CD4-positive, alpha-beta T cell (primary cell): ENCODE measurements at regions of chr10 and their contacts with region 1.

Region 1: GRCh38 chr10:17454161-17455014 is at the start of gene ST8SIA6:
- DNase-seq: peak; percentile 13 to 76 (median 48)
- ATAC-seq: peak; percentile 70
- H3K4me3 ChIP-seq: peak within 1 kb of the TSS; percentile 60
- H3K4me3 Mint-ChIP-seq: peak within 1 kb of the TSS; percentile 89
- H3K27ac ChIP-seq: no peak within 1 kb of the TSS
- H3K27ac Mint-ChIP-seq: peak within 1 kb of the TSS; percentile 59
- H3K4me1 ChIP-seq: peaks cover 15% of the 10 kb centered on the region
- H3K4me1 Mint-ChIP-seq: peaks cover 27% of the 10 kb centered on the region
- H3K27me3 ChIP-seq: no peaks in the 10 kb centered on the region
- H3K27me3 Mint-ChIP-seq: peaks cover 40% of the 10 kb centered on the region
- CTCF ChIP-seq: no peak
- total RNA-seq, gene ST8SIA6: 0.19 to 0.34 TPM

Region 2: DNA sequence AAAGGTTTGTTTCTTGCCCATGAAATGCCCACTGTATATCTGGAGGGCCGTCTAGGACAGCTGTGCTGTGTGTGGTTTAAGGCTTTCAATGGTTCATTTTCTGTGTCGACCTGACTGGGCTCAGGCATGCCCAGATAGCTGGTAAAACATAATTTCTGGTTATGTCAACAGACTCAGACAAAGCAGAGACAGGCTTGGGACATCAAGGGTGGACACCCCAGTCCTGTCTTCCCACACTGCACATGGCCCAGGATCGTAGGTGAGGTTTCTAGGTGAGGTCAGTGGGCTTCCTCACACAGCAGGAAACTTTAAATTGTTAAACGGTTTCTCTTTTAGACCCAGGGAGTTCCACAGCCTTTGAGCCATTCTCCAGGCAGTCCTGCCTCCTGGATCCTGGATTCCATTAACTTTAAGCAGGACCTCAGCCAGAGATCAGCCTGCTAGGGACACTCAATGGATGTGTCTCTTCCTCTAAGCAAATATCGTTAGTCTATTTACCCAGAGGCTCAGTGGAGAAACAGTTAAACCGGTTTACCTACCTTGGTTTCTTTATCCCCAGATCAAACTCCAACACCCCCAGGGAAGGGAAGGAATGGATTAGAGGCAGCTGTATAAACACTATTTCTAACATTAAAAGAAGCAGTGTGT is 66.4 kb before region 1 on chr10:
- CTCF ChIA-PET with region 1: no interaction called
- POLR2A ChIA-PET with region 1: no interaction called
- intact Hi-C with region 1: loop called in 1 of 2 experiments (anchors 5 kb)
- DNase-seq: no peak
- ATAC-seq: no peak
- H3K4me3 ChIP-seq: no peak overlapping the region
- H3K4me3 Mint-ChIP-seq: no peak overlapping the region
- H3K27ac ChIP-seq: no peak overlapping the region
- H3K27ac Mint-ChIP-seq: no peak overlapping the region
- H3K4me1 ChIP-seq: no peaks in the 10 kb centered on the region
- H3K4me1 Mint-ChIP-seq: no peaks in the 10 kb centered on the region
- H3K27me3 ChIP-seq: no peaks in the 10 kb centered on the region
- H3K27me3 Mint-ChIP-seq: no peaks in the 10 kb centered on the region
- CTCF ChIP-seq: no peak

Region 3: DNA sequence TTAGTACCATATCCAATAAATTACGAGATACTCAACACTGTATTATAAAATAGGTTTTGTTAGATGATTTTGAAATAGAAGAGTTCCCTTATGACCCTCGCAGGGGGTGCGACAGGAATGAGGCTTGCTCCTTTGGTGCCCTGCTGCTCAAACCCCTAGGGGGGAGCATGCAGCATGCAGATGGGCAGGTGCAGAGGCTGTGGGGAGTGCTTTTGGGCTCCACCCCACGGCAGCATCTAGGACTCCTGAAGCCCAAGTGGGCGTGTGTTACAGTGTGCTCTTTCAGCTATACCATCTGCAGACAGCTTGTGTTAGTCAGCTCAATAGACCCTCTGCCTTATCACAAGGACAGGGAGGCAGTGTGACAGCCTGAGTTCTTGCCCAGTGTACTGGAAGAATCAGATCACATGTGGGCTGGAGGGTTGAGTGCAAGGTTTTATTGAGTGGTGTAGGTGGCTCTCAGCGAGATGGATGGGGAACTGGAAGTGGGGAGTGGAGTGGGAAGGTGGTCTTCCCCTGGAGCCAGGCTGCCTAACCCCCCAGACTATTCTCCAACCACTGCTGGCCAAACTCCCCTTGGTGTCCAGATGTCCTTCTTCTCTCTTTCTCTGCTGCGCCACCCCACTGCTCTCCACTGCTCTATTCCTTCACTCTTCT is 351.7 kb after region 1 on chr10:
- CTCF ChIA-PET with region 1: no interaction called
- POLR2A ChIA-PET with region 1: no interaction called
- intact Hi-C with region 1: no loop called
- DNase-seq: peak in 3 of 14 experiments; percentile 2 to 43 (median 14)
- ATAC-seq: peak; percentile 39
- H3K4me3 ChIP-seq: no peak overlapping the region
- H3K4me3 Mint-ChIP-seq: no peak overlapping the region
- H3K27ac ChIP-seq: no peak overlapping the region
- H3K27ac Mint-ChIP-seq: no peak overlapping the region
- H3K4me1 ChIP-seq: no peaks in the 10 kb centered on the region
- H3K4me1 Mint-ChIP-seq: no peaks in the 10 kb centered on the region
- H3K27me3 ChIP-seq: no peaks in the 10 kb centered on the region
- H3K27me3 Mint-ChIP-seq: peaks cover 20% of the 10 kb centered on the region
- CTCF ChIP-seq: no peak

Region 4: GRCh38 chr10:18483516-18484186 is 1029.3 kb after region 1 on chr10:
- CTCF ChIA-PET with region 1: no interaction called
- POLR2A ChIA-PET with region 1: no interaction called
- intact Hi-C with region 1: no loop called
- DNase-seq: no peak
- ATAC-seq: no peak
- H3K4me3 ChIP-seq: no peak overlapping the region
- H3K4me3 Mint-ChIP-seq: no peak overlapping the region
- H3K27ac ChIP-seq: no peak overlapping the region
- H3K27ac Mint-ChIP-seq: no peak overlapping the region
- H3K4me1 ChIP-seq: no peaks in the 10 kb centered on the region
- H3K4me1 Mint-ChIP-seq: no peaks in the 10 kb centered on the region
- H3K27me3 ChIP-seq: no peaks in the 10 kb centered on the region
- H3K27me3 Mint-ChIP-seq: no peaks in the 10 kb centered on the region
- CTCF ChIP-seq: no peak